ENCODE measurements at regions of chr11 and their contacts with region 1.

Region 1: GRCh38 chr11:132186699-132187098 is 816.3 kb downstream of the NTM start:
- DNase-seq: no peak
- ATAC-seq: no peak
- H3K4me3 ChIP-seq: no peak overlapping the region
- H3K4me3 Mint-ChIP-seq: no peak overlapping the region
- H3K27ac ChIP-seq: no peak overlapping the region
- H3K27ac Mint-ChIP-seq: no peak overlapping the region
- H3K4me1 ChIP-seq: no peaks in the 10 kb centered on the region
- H3K4me1 Mint-ChIP-seq: no peaks in the 10 kb centered on the region
- H3K27me3 ChIP-seq: no peaks in the 10 kb centered on the region
- H3K27me3 Mint-ChIP-seq: peaks cover 0 to 19% (median 0%) of the 10 kb centered on the region in 5 donors

Region 2: DNA sequence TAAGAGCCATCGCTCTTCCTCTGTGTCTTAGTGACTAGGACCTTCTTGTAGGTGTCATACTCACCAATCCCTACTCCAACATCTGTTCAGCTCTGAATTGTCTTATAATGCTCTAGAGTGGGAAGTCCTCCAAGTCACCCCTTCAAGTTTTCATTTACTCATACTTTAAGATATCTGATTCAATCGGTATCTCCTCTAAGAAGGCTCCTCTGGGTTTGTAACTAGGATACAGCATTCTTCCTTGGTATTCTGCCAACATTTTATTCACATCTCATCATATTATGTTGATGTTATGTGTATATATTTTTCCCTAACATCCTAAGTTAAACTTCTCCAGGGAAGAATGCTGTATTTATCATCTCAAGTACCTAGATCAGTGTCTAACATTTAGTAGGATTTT is 154.1 kb before region 1 on chr11:
- CTCF ChIA-PET with region 1: no interaction called
- POLR2A ChIA-PET with region 1: no interaction called
- intact Hi-C with region 1: no loop called
- DNase-seq: no peak
- ATAC-seq: no peak
- H3K4me3 ChIP-seq: no peak overlapping the region
- H3K4me3 Mint-ChIP-seq: no peak overlapping the region
- H3K27ac ChIP-seq: no peak overlapping the region
- H3K27ac Mint-ChIP-seq: no peak overlapping the region
- H3K4me1 ChIP-seq: no peaks in the 10 kb centered on the region
- H3K4me1 Mint-ChIP-seq: peaks cover 0 to 2% (median 0%) of the 10 kb centered on the region in 7 donors
- H3K27me3 ChIP-seq: no peaks in the 10 kb centered on the region
- H3K27me3 Mint-ChIP-seq: peaks cover 0 to 6% (median 0%) of the 10 kb centered on the region in 5 donors

Region 3: DNA sequence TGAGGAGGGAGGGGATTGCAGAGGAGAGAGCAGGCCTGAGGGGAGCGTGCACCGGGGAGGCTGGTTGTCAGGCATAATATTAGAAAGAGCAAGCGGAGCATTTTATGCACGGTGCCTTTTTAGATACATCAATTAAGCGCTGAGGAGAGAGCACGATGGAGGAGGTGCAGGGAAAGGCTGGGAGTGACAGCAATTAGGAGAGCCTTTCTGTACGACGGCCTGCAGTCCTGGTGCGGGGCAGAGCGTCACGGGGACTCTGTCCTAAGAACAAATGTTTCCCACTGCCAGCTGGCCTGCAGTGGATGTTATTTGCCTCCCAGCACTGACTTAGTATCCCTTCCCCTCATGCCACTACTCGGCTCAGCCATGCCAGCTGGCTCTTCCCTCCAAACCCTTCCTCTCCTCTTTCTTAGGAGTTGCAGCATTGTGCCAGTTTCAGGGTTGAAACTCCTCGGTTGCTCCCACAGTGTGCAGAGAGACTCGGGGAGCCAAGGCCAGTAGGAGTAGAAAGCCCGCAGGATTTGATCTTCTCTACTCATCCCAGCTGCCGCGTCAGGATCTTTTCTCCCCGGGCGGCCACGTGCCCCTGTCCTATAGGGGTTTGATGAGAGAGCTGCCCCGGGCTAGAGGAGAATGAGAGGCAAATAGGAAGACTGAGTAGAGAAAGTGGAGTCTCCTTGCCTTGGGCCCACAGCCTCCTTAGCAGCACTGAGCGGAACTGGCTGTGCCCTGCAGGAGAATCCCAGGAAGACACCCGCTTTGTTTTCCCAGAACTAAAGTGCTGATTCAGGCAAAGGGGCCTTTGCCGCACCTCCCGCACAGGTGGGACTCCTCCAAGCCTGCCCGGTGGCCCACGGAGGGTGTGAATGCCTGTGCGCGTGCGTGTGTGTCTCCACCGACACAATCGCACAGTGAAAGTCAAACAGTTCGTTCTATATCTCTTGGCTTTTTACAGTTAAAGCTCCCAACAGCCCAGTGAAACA is 59.0 kb after region 1 on chr11:
- CTCF ChIA-PET with region 1: no interaction called
- POLR2A ChIA-PET with region 1: no interaction called
- intact Hi-C with region 1: loop called in 1 of 2 experiments (anchors 10 kb)
- DNase-seq: no peak
- ATAC-seq: no peak
- H3K4me3 ChIP-seq: no peak overlapping the region
- H3K4me3 Mint-ChIP-seq: no peak overlapping the region
- H3K27ac ChIP-seq: no peak overlapping the region
- H3K27ac Mint-ChIP-seq: no peak overlapping the region
- H3K4me1 ChIP-seq: no peaks in the 10 kb centered on the region
- H3K4me1 Mint-ChIP-seq: no peaks in the 10 kb centered on the region
- H3K27me3 ChIP-seq: no peaks in the 10 kb centered on the region
- H3K27me3 Mint-ChIP-seq: no peaks in the 10 kb centered on the region

Region 4: DNA sequence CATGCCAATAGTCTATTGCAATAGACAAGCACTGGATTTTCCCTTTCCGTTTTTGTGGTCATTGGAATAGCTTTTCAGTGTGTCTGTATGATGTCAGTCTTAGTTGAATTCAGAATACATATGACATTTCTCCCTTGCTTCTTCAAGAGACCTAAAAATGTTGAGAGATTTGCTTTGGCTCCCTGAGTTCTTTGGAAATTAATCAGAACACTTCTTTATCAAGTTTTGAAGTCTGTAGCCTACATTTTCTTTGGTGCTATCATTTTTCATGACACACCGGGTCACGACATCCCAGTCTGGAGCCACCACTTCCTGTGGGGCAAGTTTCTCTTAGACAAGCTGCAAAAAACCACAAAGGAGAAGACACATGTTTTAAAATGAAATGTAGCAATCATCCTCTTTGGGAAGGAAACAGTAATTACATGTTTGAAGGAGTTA is 498.5 kb after region 1 on chr11:
- CTCF ChIA-PET with region 1: no interaction called
- POLR2A ChIA-PET with region 1: no interaction called
- intact Hi-C with region 1: no loop called
- DNase-seq: no peak
- ATAC-seq: no peak
- H3K4me3 ChIP-seq: no peak overlapping the region
- H3K4me3 Mint-ChIP-seq: no peak overlapping the region
- H3K27ac ChIP-seq: no peak overlapping the region
- H3K27ac Mint-ChIP-seq: no peak overlapping the region
- H3K4me1 ChIP-seq: no peaks in the 10 kb centered on the region
- H3K4me1 Mint-ChIP-seq: peaks cover 0 to 7% (median 0%) of the 10 kb centered on the region in 7 donors
- H3K27me3 ChIP-seq: no peaks in the 10 kb centered on the region
- H3K27me3 Mint-ChIP-seq: no peaks in the 10 kb centered on the region